Dendritic cell treated with granulocyte-macrophage colony-stimulating factor and Interleukin-4, amounts not matched to agents 40 ng/mL and 50 ng/mL, for 4 days (primary cell): ENCODE measurements at regions of chr4 and their contacts with region 1.

Region 1: DNA sequence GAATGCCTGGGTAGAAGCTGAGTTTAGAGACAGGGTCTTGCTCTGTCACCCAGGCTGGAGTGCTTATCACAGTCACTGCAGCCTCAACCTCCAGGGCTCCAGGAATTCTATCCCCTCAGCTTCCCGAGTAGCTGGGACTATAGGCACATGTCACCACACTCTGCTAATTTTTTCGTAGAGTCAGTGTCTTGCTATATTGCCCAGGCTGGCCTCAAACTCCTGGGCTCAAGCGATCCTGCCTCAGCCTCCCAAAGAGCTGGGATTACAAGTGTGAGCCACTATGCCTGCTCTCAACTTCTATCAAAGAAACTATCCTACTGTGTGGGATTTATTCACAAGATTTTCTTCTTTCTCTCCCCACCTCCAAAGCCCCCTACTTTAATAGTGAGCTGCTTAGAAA is 15.7 kb downstream of the MAPK10 start:
- H3K4me3 Mint-ChIP-seq: no peak overlapping the region
- H3K27ac Mint-ChIP-seq: no peak overlapping the region
- H3K4me1 Mint-ChIP-seq: no peaks in the 10 kb centered on the region
- H3K27me3 Mint-ChIP-seq: no peaks in the 10 kb centered on the region

Region 2: DNA sequence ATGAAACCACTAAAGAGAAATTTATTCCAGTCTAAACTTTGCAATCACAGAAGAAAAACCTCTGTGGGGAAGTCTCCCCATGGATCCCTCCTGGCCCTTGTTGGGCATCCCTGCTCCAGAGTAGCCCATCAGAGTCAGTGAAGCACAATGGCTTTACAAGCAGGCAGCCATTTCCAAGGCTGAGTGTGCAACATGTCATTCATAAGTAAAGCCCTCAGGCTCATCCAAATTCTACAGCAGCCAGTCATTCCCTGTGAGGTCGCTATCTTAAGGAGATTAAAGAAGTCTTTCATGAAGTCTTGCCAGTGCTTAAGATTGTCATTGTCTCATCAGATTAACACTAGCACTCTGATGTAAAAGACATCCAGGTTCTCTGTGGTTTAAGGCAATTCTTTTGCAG is 32.7 kb after region 1 on chr4:
- intact Hi-C with region 1: loop called (anchors 1 kb)
- H3K4me3 Mint-ChIP-seq: no peak overlapping the region
- H3K27ac Mint-ChIP-seq: no peak overlapping the region
- H3K4me1 Mint-ChIP-seq: no peaks in the 10 kb centered on the region
- H3K27me3 Mint-ChIP-seq: no peaks in the 10 kb centered on the region